ENCODE measurements at regions of chr5 and their contacts with region 1.

Region 1: GRCh38 chr5:148849461-148849860 is 23.1 kb downstream of the ADRB2 start:
- DNase-seq: peak; percentile 54 to 77
- ATAC-seq: peak; percentile 52 to 82 (median 75)
- H3K4me3 ChIP-seq: no peak overlapping the region
- H3K4me3 Mint-ChIP-seq: peak overlapping the region; percentile 95
- H3K27ac ChIP-seq: peak overlapping the region; percentile 93
- H3K27ac Mint-ChIP-seq: peak overlapping the region; percentile 94 to 97
- H3K4me1 ChIP-seq: peaks cover 76% of the 10 kb centered on the region
- H3K4me1 Mint-ChIP-seq: peaks cover 89 to 90% of the 10 kb centered on the region in 2 donors
- H3K27me3 ChIP-seq: no peaks in the 10 kb centered on the region
- H3K27me3 Mint-ChIP-seq: no peaks in the 10 kb centered on the region
- CTCF ChIP-seq: no peak

Region 2: GRCh38 chr5:148887123-148887881 is 37.8 kb after region 1 on chr5:
- intact Hi-C with region 1: loop called (anchors 1 kb)
- DNase-seq: no peak
- ATAC-seq: peak; percentile 80 to 83 (median 81)
- H3K4me3 ChIP-seq: no peak overlapping the region
- H3K4me3 Mint-ChIP-seq: peak overlapping the region; percentile 48
- H3K27ac ChIP-seq: peak overlapping the region; percentile 39
- H3K27ac Mint-ChIP-seq: peak overlapping the region; percentile 85 to 92
- H3K4me1 ChIP-seq: peaks cover 2% of the 10 kb centered on the region
- H3K4me1 Mint-ChIP-seq: peaks cover 63 to 64% of the 10 kb centered on the region in 2 donors
- H3K27me3 ChIP-seq: no peaks in the 10 kb centered on the region
- H3K27me3 Mint-ChIP-seq: no peaks in the 10 kb centered on the region
- CTCF ChIP-seq: no peak

Measured in natural killer cell (primary cell).